Activated T-helper 1 cell treated with anti-CD3 and anti-CD28 coated beads, Interleukin-12 subunit alpha, Interleukin-12 subunit beta, Interleukin-2, Interleukin-4 antibody, amounts not matched to agents 30 ng/mL and 10 ng/mL and 1 ng/mL, durations not matched to agents 14 hours and 24 hours and 36 hours (primary cell): ENCODE measurements at regions of chr6 and their contacts with region 1.

Region 1: DNA sequence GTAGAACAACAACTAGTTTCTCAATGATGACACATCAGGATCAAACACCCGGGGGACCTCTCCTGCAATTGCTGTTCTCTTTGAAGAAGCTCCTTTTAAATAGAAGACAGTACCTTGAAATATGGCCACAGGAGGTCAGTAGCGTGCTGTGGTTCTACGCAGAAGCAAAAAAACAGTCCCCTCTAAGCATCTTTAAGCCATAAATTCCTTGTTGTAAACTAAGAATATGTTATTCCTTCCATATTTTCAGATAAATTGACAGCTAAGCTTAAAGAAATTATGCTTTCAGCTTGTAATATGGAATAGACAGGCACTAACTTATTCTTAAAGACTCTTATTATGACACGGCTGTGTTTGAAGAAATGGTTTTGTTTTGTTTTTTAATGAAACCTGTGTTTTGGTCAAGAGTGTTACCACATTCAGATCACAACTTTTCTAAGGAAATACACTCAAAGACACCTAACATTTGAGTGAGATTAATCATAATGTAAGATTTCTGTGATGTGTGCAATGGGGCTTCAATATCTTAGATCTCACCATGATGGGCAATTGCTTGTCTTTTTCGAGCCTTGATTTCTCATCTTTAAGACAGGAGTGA is 49.7 kb upstream of the IL20RA start:
- DNase-seq: peak; percentile 38
- H3K4me3 Mint-ChIP-seq: no peak overlapping the region
- H3K27ac Mint-ChIP-seq: no peak overlapping the region
- H3K4me1 Mint-ChIP-seq: peaks cover 57% of the 10 kb centered on the region
- H3K27me3 Mint-ChIP-seq: no peaks in the 10 kb centered on the region

Region 2: GRCh38 chr6:136893187-136893586 is 201.3 kb before region 1 on chr6:
- intact Hi-C with region 1: no loop called
- DNase-seq: no peak
- H3K4me3 Mint-ChIP-seq: no peak overlapping the region
- H3K27ac Mint-ChIP-seq: no peak overlapping the region
- H3K4me1 Mint-ChIP-seq: peaks cover 5% of the 10 kb centered on the region
- H3K27me3 Mint-ChIP-seq: peaks cover 2% of the 10 kb centered on the region

Region 3: GRCh38 chr6:136967876-136968752 is 126.4 kb before region 1 on chr6:
- intact Hi-C with region 1: loop called (anchors 1 kb)
- DNase-seq: peak; percentile 46
- H3K4me3 Mint-ChIP-seq: no peak overlapping the region
- H3K27ac Mint-ChIP-seq: no peak overlapping the region
- H3K4me1 Mint-ChIP-seq: peaks cover 9% of the 10 kb centered on the region
- H3K27me3 Mint-ChIP-seq: peaks cover 43% of the 10 kb centered on the region

Region 4: DNA sequence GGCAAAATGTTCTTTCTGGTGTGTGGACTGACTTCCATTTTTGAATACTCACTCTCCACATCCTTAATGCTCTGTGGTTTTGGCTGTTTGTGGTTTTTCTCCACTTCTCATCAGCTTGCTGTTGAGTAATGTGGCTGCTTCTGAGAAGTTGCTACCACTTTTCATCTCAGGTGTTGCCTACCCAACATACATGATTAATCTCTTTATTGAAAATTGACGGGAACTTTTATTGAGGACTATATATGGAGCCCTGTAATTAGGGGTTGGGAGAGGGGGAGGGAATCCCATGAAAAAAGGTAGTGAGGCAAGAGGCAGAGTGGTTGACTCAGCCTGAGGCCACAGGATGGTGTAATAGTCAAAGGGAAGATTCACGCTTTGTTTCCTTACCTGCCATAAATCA is 61.3 kb after region 1 on chr6:
- intact Hi-C with region 1: loop called (anchors 1 kb)
- DNase-seq: peak; percentile 63
- H3K4me3 Mint-ChIP-seq: peak overlapping the region; percentile 30
- H3K27ac Mint-ChIP-seq: peak overlapping the region; percentile 73
- H3K4me1 Mint-ChIP-seq: peaks cover 64% of the 10 kb centered on the region
- H3K27me3 Mint-ChIP-seq: peaks cover 9% of the 10 kb centered on the region

Region 5: DNA sequence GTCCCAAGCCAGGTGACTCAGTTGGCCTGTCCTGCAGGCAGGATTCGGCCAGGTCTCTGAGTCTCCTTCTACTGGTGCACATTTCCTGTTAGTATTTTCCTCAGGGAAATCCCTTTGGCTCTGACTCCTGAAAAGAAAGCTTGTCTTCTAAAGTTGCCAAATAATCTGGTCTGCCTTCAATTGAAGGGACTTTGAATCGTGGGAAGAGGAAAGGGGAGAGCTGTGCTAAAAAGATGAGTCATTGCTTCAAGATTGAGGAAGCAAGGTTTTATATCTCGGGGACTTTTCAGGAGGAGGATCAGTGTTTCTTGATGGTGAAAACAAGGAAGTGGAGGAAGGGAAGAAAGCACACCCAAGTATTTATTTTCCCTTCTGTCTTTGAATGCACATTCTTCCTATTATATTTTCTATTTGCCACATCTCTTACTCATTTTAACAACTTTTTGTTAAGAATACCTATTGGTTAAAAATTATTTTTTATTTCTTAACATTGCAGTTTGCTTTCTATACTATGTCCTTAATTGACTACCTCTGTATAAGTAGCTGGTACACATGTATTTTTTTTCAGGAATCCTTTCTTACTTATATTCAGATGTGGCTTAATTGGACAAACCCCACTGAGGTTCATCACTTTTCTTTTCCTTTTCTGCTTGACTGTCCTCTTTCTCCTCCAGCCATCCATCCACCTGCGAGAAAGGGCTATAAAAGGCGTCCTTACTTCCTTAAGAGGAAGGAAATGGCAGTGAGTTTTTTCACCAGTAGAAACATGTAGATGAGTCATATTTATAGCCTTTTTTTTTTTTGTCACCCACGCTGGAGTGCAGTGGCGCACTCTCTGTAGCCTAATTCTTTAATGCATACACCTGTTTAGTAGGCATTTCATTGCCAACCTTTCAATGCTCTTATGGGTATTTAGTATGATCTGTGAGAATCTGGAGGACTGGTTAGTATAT is 139.7 kb after region 1 on chr6:
- intact Hi-C with region 1: loop called (anchors 2 kb)
- DNase-seq: peak; percentile 12
- H3K4me3 Mint-ChIP-seq: peak overlapping the region; percentile 25
- H3K27ac Mint-ChIP-seq: peak overlapping the region; percentile 50
- H3K4me1 Mint-ChIP-seq: peaks cover 59% of the 10 kb centered on the region
- H3K27me3 Mint-ChIP-seq: peaks cover 8% of the 10 kb centered on the region

Region 6: DNA sequence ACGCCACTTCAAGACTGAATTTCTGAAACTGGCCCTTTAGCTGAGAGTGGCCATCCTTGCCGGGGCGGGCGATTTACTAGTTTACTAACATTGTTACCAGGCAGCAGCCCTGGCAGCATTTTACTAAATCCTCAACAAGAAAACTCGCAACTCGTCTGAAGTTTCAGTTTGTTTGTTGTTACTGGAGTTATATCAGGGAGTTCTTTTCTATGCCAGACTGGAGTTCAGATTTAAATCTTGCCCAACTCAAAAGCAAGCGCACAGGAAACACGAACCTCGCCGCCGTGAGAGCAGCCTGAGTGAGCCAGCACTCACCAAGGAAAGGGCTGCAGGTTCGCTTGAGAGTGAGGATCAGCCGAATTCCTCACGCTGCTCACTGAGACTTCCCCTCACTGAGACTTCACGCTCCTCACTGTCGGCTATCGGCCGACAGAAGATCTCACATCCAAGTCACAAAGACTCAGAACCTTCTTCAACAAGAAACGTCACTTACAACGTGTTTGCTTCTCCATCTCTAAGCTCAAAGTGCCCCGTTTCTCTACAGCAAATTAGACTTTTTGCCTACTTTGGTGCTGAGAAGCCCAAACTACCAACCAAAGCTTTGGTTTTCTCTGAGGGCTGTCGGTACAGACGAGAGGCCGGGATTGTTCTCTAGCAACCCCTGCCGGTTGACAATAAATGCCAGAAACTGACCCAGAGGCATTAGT is 320.8 kb after region 1 on chr6:
- intact Hi-C with region 1: loop called (anchors 1 kb)
- DNase-seq: peak; percentile 57
- H3K4me3 Mint-ChIP-seq: peak overlapping the region; percentile 81
- H3K27ac Mint-ChIP-seq: peak overlapping the region; percentile 53
- H3K4me1 Mint-ChIP-seq: peaks cover 14% of the 10 kb centered on the region
- H3K27me3 Mint-ChIP-seq: peaks cover 23% of the 10 kb centered on the region

Region 7: DNA sequence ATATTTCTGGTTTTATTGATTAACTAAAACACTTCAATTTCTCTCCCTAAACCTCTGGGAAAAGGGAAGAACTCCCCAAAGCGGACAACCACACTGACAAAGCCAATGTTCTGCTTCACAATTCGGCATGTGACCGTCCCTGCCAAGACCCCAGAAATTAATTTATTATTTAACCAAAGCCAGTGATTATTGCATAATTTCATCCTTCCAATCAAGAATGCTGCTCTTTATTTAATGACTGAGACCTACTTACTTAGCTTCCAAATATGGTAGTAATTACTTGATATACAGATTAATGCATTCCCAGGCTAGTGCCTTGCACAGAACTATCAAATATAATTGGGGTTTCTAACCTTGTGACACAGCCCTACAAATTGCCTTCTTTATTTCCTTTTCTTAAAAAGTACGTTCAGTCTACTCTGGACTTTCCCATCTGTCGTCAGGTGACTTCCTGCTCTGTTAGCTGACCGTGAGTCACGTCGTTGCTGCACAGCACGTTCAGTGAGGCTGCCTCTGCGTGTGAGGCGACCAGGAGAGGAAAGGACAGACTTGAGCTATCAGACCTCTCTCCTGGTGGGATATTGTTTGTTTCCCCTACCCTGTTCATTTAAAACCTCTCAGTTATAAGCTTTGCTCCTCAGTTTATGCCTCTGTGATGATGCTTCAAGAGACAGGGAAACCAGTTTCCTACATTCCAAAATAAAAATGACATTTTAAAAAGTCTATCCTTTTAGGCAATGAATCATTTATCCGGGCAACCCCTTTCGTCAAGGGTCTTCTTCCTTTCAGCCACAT is 716.8 kb after region 1 on chr6:
- intact Hi-C with region 1: loop called (anchors 10 kb)
- DNase-seq: peak; percentile 78
- H3K4me3 Mint-ChIP-seq: peak overlapping the region; percentile 43
- H3K27ac Mint-ChIP-seq: peak overlapping the region; percentile 81
- H3K4me1 Mint-ChIP-seq: peaks cover 68% of the 10 kb centered on the region
- H3K27me3 Mint-ChIP-seq: no peaks in the 10 kb centered on the region